Body of pancreas (tissue), 4 donors: ENCODE measurements at regions of chr5 and their contacts with region 1.

Region 1: GRCh38 chr5:160342403-160342941 is 28.0 kb downstream of the C1QTNF2 start:
- DNase-seq: no peak
- ATAC-seq: no peak
- H3K4me3 ChIP-seq: no peak overlapping the region
- H3K27ac ChIP-seq: no peak overlapping the region
- H3K4me1 ChIP-seq: peaks cover 10% of the 10 kb centered on the region
- H3K27me3 ChIP-seq: no peaks in the 10 kb centered on the region
- CTCF ChIP-seq: no peak
- POLR2A ChIP-seq: no peak

Region 2: GRCh38 chr5:160021831-160022446 is 320.5 kb before region 1 on chr5:
- intact Hi-C with region 1: loop called (anchors 10 kb)
- DNase-seq: peak; percentile 50 to 73 (median 66)
- ATAC-seq: peak; percentile 94
- H3K4me3 ChIP-seq: no peak overlapping the region
- H3K27ac ChIP-seq: peak overlapping the region in 2 of 4 donors; percentile 40 to 63
- H3K4me1 ChIP-seq: peaks cover 21% of the 10 kb centered on the region
- H3K27me3 ChIP-seq: no peaks in the 10 kb centered on the region
- CTCF ChIP-seq: peak; percentile 55 to 91 (median 82)
- POLR2A ChIP-seq: no peak

Region 3: DNA sequence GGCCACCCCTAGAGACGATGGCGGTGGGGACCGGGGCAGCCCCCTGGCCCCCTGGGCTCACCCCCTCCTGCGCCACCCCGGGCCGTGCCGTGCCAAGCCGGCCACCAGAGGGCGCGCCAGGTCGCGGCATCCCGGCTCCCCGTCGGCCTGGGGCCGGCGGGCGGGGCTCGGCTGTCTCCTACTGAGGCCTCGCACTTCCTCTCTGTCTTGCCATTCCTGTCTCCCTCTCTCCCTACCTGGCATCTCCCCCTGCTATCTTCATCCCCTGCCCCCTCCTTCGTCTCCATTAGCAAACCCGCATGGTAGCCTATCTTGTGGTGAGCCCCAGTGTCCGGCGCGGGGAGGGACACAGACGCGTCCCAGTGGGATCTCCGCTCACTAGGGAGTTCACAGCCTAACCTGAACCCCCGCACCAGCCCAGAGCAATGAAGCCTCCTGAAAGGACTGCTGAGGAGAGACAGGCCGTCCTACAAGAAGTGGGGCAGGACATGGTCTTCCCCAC is 143.0 kb before region 1 on chr5:
- intact Hi-C with region 1: loop called (anchors 2 kb)
- DNase-seq: peak; percentile 57 to 77 (median 69)
- ATAC-seq: peak; percentile 93
- H3K4me3 ChIP-seq: no peak overlapping the region
- H3K27ac ChIP-seq: no peak overlapping the region
- H3K4me1 ChIP-seq: peaks cover 11% of the 10 kb centered on the region
- H3K27me3 ChIP-seq: no peaks in the 10 kb centered on the region
- CTCF ChIP-seq: peak; percentile 53 to 94 (median 89)
- POLR2A ChIP-seq: no peak

Region 4: GRCh38 chr5:160421625-160422258 is 79.3 kb after region 1 on chr5 and contains the start of gene PTTG1:
- intact Hi-C with region 1: no loop called
- DNase-seq: peak; percentile 95 to 98 (median 96)
- ATAC-seq: peak; percentile 85
- H3K4me3 ChIP-seq: peak within 1 kb of the TSS; percentile 34 to 49
- H3K27ac ChIP-seq: peak within 1 kb of the TSS in 2 of 4 donors; percentile 24 to 54
- H3K4me1 ChIP-seq: peaks cover 30% of the 10 kb centered on the region
- H3K27me3 ChIP-seq: no peaks in the 10 kb centered on the region
- CTCF ChIP-seq: no peak
- POLR2A ChIP-seq: peak in 2 of 3 donors; percentile 14 to 19
- total RNA-seq, gene PTTG1: 5.7 to 6.6 TPM